HepG2 (cell line): ENCODE measurements at regions of chr3 and their contacts with region 1.

Region 1: GRCh38 chr3:42012935-42013690 is 51.2 kb upstream of the ULK4 start:
- DNase-seq: peak; percentile 37
- ATAC-seq: peak; percentile 73
- H3K4me3 ChIP-seq: peak overlapping the region; percentile 62 to 85 (median 74)
- H3K27ac ChIP-seq: peak overlapping the region; percentile 3
- H3K4me1 ChIP-seq: peaks cover 42% of the 10 kb centered on the region
- H3K27me3 ChIP-seq: peaks cover 0 to 1% of the 10 kb centered on the region in 2 experiments; a peak in 1 of 5 replicates
- CTCF ChIP-seq: no peak
- EP300 ChIP-seq: no peak
- POLR2A ChIP-seq: peak in 1 of 2 experiments; percentile 70; a peak in 2 of 4 replicates
- RAD21 ChIP-seq: no peak

Region 2: GRCh38 chr3:42032693-42033349 is 19.7 kb after region 1 on chr3:
- CTCF ChIA-PET with region 1: no interaction called
- POLR2A ChIA-PET with region 1: interaction called, 4 read pairs
- in situ Hi-C with region 1: no loop called
- intact Hi-C with region 1: loop called (anchors 2 kb)
- DNase-seq: peak; percentile 95
- ATAC-seq: peak; percentile 95
- H3K4me3 ChIP-seq: peak overlapping the region; percentile 26 to 53 (median 43)
- H3K27ac ChIP-seq: peak overlapping the region; percentile 85
- H3K4me1 ChIP-seq: peaks cover 58% of the 10 kb centered on the region
- H3K27me3 ChIP-seq: no peaks in the 10 kb centered on the region
- CTCF ChIP-seq: peak; percentile 46
- EP300 ChIP-seq: peak; percentile 76 to 88; a peak in 3 of 4 replicates
- POLR2A ChIP-seq: no peak
- RAD21 ChIP-seq: peak; percentile 46; the same call in 1 of the 2 replicates

Region 3: DNA sequence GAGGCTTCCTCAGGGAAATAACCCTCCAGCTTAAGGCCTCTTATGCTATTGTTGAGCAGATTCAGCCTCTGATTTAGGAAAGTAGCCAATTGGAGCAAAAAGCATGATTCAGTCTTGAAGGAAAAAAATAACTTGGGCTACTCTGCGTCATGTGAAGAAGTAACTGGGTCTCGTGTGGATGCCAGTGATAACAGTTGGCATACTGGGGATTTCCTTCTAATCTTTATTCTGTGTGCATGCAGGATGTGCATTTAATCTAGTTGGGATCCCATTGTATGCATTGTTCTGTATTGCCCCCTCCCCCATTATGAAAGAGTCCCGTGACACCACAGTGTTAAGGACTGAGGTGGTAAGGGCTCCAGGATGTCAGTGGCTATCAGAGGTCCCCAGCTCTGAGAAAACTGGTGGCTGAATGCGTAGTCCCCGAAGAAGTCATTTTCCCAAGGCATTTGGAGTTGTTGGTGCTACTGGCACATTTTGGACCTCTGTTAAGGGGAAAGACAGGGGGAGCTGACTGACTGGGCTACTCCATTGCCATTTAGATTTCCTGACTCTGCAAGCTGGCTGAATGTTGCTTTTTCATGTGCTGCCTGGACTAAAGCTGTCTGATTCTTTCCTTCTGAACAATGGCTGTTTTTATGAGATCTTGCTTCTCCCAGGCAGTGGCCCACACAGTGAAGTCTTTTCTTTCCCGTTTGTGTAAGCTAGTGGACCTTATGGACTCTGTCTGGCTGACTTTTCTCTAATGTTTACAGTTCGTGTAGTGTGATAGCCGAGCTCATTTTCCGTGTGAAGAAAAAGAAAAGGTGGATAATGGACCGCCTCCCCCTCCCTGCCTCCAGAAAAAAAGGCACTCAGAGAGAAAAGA is 39.6 kb after region 1 on chr3:
- CTCF ChIA-PET with region 1: no interaction called
- POLR2A ChIA-PET with region 1: no interaction called
- in situ Hi-C with region 1: loop called (anchors 5 kb)
- intact Hi-C with region 1: loop called (anchors 1 kb)
- DNase-seq: peak; percentile 98
- ATAC-seq: peak; percentile 94
- H3K4me3 ChIP-seq: peak overlapping the region; percentile 14 to 58 (median 40)
- H3K27ac ChIP-seq: peak overlapping the region; percentile 97
- H3K4me1 ChIP-seq: peaks cover 83% of the 10 kb centered on the region
- H3K27me3 ChIP-seq: no peaks in the 10 kb centered on the region; a peak in 1 of 5 replicates
- CTCF ChIP-seq: no peak
- EP300 ChIP-seq: peak in 1 of 2 experiments; percentile 88; a peak in 2 of 4 replicates
- POLR2A ChIP-seq: peak in 1 of 2 experiments; percentile 59; a peak in 3 of 4 replicates
- RAD21 ChIP-seq: no peak

Region 4: GRCh38 chr3:42080452-42080891 is 67.4 kb after region 1 on chr3:
- CTCF ChIA-PET with region 1: no interaction called
- POLR2A ChIA-PET with region 1: interaction called, 3 read pairs
- in situ Hi-C with region 1: loop called (anchors 5 kb)
- intact Hi-C with region 1: loop called (anchors 5 kb)
- DNase-seq: peak; percentile 83
- ATAC-seq: peak; percentile 74
- H3K4me3 ChIP-seq: no peak overlapping the region
- H3K27ac ChIP-seq: peak overlapping the region; percentile 30
- H3K4me1 ChIP-seq: peaks cover 37% of the 10 kb centered on the region
- H3K27me3 ChIP-seq: no peaks in the 10 kb centered on the region
- CTCF ChIP-seq: no peak
- EP300 ChIP-seq: no peak
- POLR2A ChIP-seq: no peak
- RAD21 ChIP-seq: no peak

Region 5: DNA sequence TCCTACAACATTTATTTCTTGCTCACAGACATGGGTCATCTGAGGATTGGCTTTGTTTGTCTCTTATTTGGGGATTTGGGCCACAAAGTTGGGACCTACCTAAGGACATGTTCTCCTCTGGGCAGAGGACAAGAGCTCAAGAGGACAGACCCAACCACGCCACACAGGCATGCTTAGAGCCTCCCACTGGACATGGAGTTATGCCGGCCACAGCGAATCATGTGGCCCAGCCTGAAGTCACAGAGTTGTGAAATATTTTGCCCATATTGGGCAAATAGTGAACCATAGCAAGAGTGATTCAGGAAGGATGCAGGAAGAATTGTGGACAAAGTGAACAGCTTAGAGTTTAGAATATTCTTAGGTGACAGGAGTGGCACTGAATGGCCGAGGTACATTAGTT is 87.9 kb after region 1 on chr3:
- CTCF ChIA-PET with region 1: interaction called, 4 read pairs
- POLR2A ChIA-PET with region 1: interaction called, 4 read pairs
- in situ Hi-C with region 1: no loop called
- intact Hi-C with region 1: loop called (anchors 1 kb)
- DNase-seq: peak; percentile 51
- ATAC-seq: peak; percentile 39
- H3K4me3 ChIP-seq: no peak overlapping the region
- H3K27ac ChIP-seq: peak overlapping the region; percentile 3
- H3K4me1 ChIP-seq: peaks cover 29% of the 10 kb centered on the region
- H3K27me3 ChIP-seq: no peaks in the 10 kb centered on the region
- CTCF ChIP-seq: no peak
- EP300 ChIP-seq: no peak
- POLR2A ChIP-seq: no peak
- RAD21 ChIP-seq: no peak

Region 6: GRCh38 chr3:42190701-42191462 is 177.8 kb after region 1 on chr3:
- CTCF ChIA-PET with region 1: no interaction called
- POLR2A ChIA-PET with region 1: interaction called, 3 read pairs
- in situ Hi-C with region 1: loop called (anchors 25 kb)
- intact Hi-C with region 1: no loop called
- DNase-seq: peak; percentile 55
- ATAC-seq: peak; percentile 90
- H3K4me3 ChIP-seq: no peak overlapping the region
- H3K27ac ChIP-seq: no peak overlapping the region
- H3K4me1 ChIP-seq: no peaks in the 10 kb centered on the region
- H3K27me3 ChIP-seq: no peaks in the 10 kb centered on the region
- CTCF ChIP-seq: peak; percentile 90
- EP300 ChIP-seq: no peak
- POLR2A ChIP-seq: no peak
- RAD21 ChIP-seq: peak; percentile 88